K562 (cell line): ENCODE measurements at regions of chr22 and their contacts with region 1.

Region 1: GRCh38 chr22:20647586-20648305 is 126.2 kb upstream of the SERPIND1 start:
- DNase-seq: peak in 1 of 4 experiments; percentile 17
- ATAC-seq: no peak
- H3K4me3 ChIP-seq: no peak overlapping the region
- H3K27ac ChIP-seq: no peak overlapping the region
- H3K4me1 ChIP-seq: peaks cover 0 to 4% of the 10 kb centered on the region in 2 experiments; a peak in 1 of 5 replicates
- H3K27me3 ChIP-seq: peaks cover 45 to 70% of the 10 kb centered on the region in 2 experiments
- CTCF ChIP-seq: no peak
- EP300 ChIP-seq: no peak
- POLR2A ChIP-seq: no peak
- RAD21 ChIP-seq: no peak

Region 2: GRCh38 chr22:20630873-20631617 is 16.7 kb before region 1 on chr22:
- CTCF ChIA-PET with region 1: no interaction called
- POLR2A ChIA-PET with region 1: interaction called, 41 read pairs
- in situ Hi-C with region 1: no loop called
- intact Hi-C with region 1: no loop called
- DNase-seq: no peak
- ATAC-seq: no peak
- H3K4me3 ChIP-seq: no peak overlapping the region
- H3K27ac ChIP-seq: no peak overlapping the region
- H3K4me1 ChIP-seq: peaks cover 0 to 4% of the 10 kb centered on the region in 2 experiments; a peak in 2 of 5 replicates
- H3K27me3 ChIP-seq: peaks cover 36 to 73% of the 10 kb centered on the region in 2 experiments
- CTCF ChIP-seq: no peak
- EP300 ChIP-seq: no peak
- POLR2A ChIP-seq: no peak
- RAD21 ChIP-seq: no peak

Region 3: DNA sequence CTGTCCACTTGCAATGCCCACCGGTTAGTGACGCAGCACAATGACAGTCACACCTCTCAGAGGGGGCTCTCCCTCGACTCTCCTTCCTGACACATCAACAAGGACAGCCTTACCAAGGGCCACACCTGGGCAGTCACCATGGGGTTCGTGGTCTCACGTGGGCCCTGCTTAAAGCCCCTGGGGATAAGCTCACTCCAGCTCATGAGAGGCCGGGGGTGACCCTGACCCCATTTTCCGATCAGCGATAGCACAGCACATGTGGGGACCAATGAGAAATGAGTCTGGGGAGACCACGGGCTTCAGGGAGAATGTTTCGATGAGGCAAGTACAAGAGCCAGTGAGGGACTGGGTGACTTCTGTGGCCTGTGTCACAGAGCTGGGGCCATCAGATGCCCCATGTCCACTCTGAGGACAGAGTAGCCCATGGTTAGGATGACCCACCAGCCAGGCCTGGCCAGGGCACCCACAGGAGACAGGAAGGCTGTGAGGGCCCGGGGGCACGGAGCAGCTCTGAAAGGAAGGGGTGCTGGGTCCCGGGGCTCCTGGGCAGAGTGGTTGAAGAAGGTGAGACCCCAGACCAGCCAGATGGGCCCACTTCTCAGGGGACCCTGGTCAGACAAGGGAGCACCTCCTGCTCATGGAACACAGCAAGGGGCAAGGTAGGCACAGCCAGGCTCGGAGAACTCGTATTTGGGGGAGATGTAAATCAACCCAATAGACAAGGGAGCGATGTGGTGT is 11.5 kb before region 1 on chr22:
- CTCF ChIA-PET with region 1: no interaction called
- POLR2A ChIA-PET with region 1: interaction called, 41 read pairs
- in situ Hi-C with region 1: no loop called
- intact Hi-C with region 1: no loop called
- DNase-seq: no peak
- ATAC-seq: peak; percentile 3; the same call in 1 of the 3 replicates
- H3K4me3 ChIP-seq: no peak overlapping the region
- H3K27ac ChIP-seq: no peak overlapping the region
- H3K4me1 ChIP-seq: peaks cover 0 to 7% of the 10 kb centered on the region in 2 experiments; a peak in 2 of 5 replicates
- H3K27me3 ChIP-seq: peaks cover 7 to 55% of the 10 kb centered on the region in 2 experiments; a peak in 4 of 5 replicates
- CTCF ChIP-seq: no peak
- EP300 ChIP-seq: no peak
- POLR2A ChIP-seq: no peak
- RAD21 ChIP-seq: no peak

Region 4: DNA sequence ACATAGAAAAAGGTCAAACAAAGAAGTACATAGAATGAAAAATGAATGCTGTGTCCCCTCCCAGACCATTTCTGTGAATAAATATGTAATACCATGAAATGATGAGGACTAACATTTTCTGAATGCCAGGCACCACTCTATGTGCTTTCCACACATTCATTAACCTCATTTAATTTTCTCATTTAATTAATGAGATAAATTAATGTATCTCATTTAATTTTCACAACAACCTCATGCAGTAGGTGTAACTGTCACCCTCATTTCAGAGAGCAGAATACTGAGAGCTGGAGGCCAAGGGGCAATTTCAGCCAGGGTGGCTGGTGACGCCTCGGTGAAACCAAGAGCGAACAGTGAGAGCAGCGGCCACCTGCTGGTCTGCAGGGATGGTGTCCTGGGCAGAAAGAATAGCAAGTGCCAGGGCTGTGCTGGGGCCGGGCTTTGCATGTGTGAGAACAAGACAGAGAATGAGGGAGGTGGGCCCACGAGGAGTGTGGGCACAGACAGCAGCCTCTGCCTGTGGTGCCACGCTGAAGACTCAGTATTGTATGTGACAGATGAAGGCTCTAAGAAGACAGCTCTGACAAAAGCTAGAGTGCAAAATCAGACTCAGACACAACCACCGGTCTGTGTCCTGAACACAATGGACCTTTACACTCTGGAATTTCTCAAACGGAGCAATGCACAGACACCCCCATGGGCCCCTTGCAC is 124.3 kb after region 1 on chr22:
- CTCF ChIA-PET with region 1: no interaction called
- POLR2A ChIA-PET with region 1: no interaction called
- in situ Hi-C with region 1: no loop called
- intact Hi-C with region 1: no loop called
- DNase-seq: no peak
- ATAC-seq: peak; percentile 50
- H3K4me3 ChIP-seq: no peak overlapping the region
- H3K27ac ChIP-seq: no peak overlapping the region
- H3K4me1 ChIP-seq: peaks cover 13 to 15% of the 10 kb centered on the region in 2 experiments
- H3K27me3 ChIP-seq: no peaks in the 10 kb centered on the region
- CTCF ChIP-seq: peak; percentile 38 to 60 (median 60)
- EP300 ChIP-seq: no peak
- POLR2A ChIP-seq: no peak
- RAD21 ChIP-seq: no peak